Activated CD4-positive, alpha-beta T cell treated with anti-CD3 and anti-CD28 coated beads, Interleukin-2, amount 10 ng/mL, durations not matched to agents 24 days and 14 days (primary cell): ENCODE measurements at regions of chr19 and their contacts with region 1.

Region 1: GRCh38 chr19:48271531-48272151 is 1.8 kb downstream of the ZNF114 start:
- DNase-seq: peak; percentile 72
- H3K4me3 Mint-ChIP-seq: peak overlapping the region; percentile 93
- H3K27ac Mint-ChIP-seq: peak overlapping the region; percentile 53
- H3K4me1 Mint-ChIP-seq: peaks cover 15% of the 10 kb centered on the region
- H3K27me3 Mint-ChIP-seq: peaks cover 20% of the 10 kb centered on the region

Region 2: GRCh38 chr19:48290771-48291488 is 19.3 kb after region 1 on chr19:
- intact Hi-C with region 1: loop called (anchors 1 kb)
- DNase-seq: peak; percentile 90
- H3K4me3 Mint-ChIP-seq: peak overlapping the region; percentile 86
- H3K27ac Mint-ChIP-seq: no peak overlapping the region
- H3K4me1 Mint-ChIP-seq: peaks cover 7% of the 10 kb centered on the region
- H3K27me3 Mint-ChIP-seq: peaks cover 8% of the 10 kb centered on the region

Region 3: DNA sequence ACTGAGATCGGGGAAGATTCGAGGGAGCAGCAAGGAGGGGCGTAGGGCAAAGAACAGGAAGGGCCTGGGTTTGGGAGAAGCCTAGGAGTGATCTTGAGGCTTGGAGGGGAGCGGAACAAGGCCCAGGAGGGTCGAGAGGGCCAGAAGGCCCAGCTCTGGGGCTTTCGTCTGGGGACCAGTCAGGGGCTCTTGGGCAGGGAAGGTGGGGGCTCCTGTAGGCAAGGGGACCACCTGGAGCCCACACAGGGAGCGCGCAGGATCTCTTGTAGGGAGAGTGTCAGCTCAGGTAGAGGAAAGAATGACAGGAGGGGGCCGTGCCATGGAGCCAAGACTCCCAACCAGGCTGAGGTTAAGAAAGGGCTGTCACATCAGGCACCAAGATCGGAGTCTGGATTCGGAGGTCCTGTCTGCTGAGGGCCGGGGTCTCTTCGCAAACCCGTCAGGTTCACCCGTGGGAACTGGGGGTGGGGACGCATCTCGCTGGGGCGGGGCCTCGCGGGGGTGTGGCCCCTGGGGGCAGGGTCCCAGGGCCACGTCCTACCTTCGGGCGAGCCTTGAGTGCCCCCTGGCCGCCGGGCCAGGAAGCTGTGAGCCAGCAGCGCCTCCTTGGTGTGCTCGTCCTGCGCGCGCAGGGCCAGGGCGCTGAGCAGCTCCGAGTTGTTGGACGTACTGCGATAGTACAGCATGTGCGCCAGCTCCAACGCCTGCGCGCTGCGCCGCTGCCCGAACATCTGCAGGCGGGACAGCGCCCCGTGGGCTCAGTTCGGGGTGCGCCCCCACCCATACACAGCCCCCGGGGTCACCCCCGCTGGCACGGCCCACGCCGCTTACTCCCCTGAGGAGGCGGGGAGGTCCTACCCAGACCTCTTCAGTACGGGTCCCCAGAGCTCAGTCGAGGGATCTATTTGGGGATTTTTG is 62.1 kb after region 1 on chr19:
- intact Hi-C with region 1: loop called (anchors 5 kb)
- DNase-seq: peak; percentile 98
- H3K4me3 Mint-ChIP-seq: peak overlapping the region; percentile 91
- H3K27ac Mint-ChIP-seq: peak overlapping the region; percentile 90
- H3K4me1 Mint-ChIP-seq: peaks cover 52% of the 10 kb centered on the region
- H3K27me3 Mint-ChIP-seq: no peaks in the 10 kb centered on the region

Region 4: DNA sequence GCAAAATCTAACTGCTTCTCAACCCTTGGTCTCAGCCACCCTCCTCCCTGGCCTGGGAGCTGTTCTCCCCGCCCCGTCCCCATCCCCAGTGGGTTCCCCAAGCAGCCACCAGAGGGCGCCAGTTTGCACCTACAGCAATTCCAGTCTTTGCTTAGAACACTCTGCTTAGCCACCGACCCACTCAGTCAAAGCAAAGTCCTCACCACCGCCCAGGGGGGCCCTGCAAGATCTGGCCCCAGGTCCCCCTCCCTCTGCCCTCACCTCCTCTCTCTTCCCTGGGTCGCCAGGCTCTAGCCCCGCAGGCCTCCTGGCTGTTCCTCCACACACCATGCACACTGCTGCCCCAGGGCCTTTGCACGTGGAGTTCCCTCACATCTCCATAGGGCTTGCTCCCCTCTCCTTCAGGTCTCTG is 79.7 kb after region 1 on chr19:
- intact Hi-C with region 1: no loop called
- DNase-seq: peak; percentile 93
- H3K4me3 Mint-ChIP-seq: no peak overlapping the region
- H3K27ac Mint-ChIP-seq: peak overlapping the region; percentile 8
- H3K4me1 Mint-ChIP-seq: peaks cover 8% of the 10 kb centered on the region
- H3K27me3 Mint-ChIP-seq: no peaks in the 10 kb centered on the region